CD8-positive, alpha-beta memory T cell (primary cell): ENCODE measurements at regions of chr3 and their contacts with region 1.

Region 1: DNA sequence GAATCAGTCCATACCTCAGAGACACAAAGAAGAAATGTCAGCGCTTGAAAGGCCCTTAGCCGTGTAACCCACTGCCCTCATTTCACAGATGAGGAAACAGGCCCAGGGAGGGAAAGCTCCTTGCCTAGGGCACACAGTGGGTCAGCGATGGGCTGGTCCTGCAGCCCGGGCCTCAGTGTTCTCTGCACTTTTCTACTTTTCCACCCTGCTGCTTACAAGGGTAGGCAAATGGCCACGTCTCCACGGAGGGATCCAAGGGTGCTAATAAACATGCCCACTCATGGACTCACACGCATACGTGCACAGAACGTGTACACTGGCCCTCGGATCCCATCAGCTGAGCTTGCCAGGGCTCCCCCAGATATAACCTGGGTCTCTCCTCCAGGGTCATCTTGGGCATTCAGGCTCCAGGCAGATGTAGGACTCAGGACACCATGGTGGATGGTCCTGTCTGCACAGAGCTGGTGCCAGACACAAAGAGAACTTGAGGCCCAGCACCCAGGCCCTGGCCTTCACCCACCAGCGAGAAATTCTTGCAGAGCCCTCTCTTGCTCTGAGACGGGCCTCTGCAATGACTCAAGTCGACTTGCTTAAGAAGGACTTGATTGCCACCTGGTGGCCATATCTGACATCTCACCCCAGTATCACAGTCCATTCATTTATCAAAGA is 34.5 kb upstream of the VPS8 start:
- DNase-seq: peak; percentile 60 to 85 (median 71)
- H3K4me3 ChIP-seq: no peak overlapping the region
- H3K4me3 Mint-ChIP-seq: no peak overlapping the region
- H3K27ac ChIP-seq: no peak overlapping the region
- H3K27ac Mint-ChIP-seq: no peak overlapping the region
- H3K4me1 ChIP-seq: no peaks in the 10 kb centered on the region
- H3K4me1 Mint-ChIP-seq: no peaks in the 10 kb centered on the region
- H3K27me3 ChIP-seq: peaks cover 8% of the 10 kb centered on the region
- H3K27me3 Mint-ChIP-seq: peaks cover 15 to 62% of the 10 kb centered on the region in 2 donors

Region 2: GRCh38 chr3:184362668-184363540 is 414.6 kb before region 1 on chr3:
- CTCF ChIA-PET with region 1: no interaction called
- POLR2A ChIA-PET with region 1: interaction called, 11 read pairs
- DNase-seq: peak; percentile 89 to 96 (median 93)
- H3K4me3 ChIP-seq: peak overlapping the region; percentile 73
- H3K4me3 Mint-ChIP-seq: peak overlapping the region; percentile 92 to 99 (median 97)
- H3K27ac ChIP-seq: peak overlapping the region; percentile 88
- H3K27ac Mint-ChIP-seq: peak overlapping the region; percentile 95 to 98 (median 96)
- H3K4me1 ChIP-seq: peaks cover 23% of the 10 kb centered on the region
- H3K4me1 Mint-ChIP-seq: peaks cover 22 to 35% (median 31%) of the 10 kb centered on the region in 3 donors
- H3K27me3 ChIP-seq: no peaks in the 10 kb centered on the region
- H3K27me3 Mint-ChIP-seq: peaks cover 0 to 4% of the 10 kb centered on the region in 2 donors

Region 3: DNA sequence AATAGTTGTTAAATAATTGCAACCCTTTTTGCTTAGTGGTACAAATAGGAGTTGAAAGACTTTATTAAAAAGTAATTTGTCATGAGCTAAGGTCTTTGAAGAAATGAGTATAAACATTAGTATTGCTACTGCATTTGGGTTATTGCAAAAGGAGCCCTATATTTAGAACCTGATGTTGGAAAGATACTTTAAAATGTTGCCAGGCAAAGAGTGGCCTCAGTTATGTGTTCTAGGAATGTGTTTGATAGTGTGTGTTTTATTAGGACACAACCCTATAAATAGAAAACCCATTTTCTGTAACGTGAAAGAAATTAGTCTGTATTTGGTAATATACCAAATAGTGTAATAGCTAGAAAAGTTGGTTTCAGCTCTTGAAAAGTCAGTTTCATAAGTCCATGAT is 45.2 kb after region 1 on chr3:
- CTCF ChIA-PET with region 1: no interaction called
- POLR2A ChIA-PET with region 1: no interaction called
- DNase-seq: no peak
- H3K4me3 ChIP-seq: no peak overlapping the region
- H3K4me3 Mint-ChIP-seq: no peak overlapping the region
- H3K27ac ChIP-seq: no peak overlapping the region
- H3K27ac Mint-ChIP-seq: no peak overlapping the region
- H3K4me1 ChIP-seq: no peaks in the 10 kb centered on the region
- H3K4me1 Mint-ChIP-seq: peaks cover 9 to 30% (median 12%) of the 10 kb centered on the region in 3 donors
- H3K27me3 ChIP-seq: no peaks in the 10 kb centered on the region
- H3K27me3 Mint-ChIP-seq: no peaks in the 10 kb centered on the region

Region 4: DNA sequence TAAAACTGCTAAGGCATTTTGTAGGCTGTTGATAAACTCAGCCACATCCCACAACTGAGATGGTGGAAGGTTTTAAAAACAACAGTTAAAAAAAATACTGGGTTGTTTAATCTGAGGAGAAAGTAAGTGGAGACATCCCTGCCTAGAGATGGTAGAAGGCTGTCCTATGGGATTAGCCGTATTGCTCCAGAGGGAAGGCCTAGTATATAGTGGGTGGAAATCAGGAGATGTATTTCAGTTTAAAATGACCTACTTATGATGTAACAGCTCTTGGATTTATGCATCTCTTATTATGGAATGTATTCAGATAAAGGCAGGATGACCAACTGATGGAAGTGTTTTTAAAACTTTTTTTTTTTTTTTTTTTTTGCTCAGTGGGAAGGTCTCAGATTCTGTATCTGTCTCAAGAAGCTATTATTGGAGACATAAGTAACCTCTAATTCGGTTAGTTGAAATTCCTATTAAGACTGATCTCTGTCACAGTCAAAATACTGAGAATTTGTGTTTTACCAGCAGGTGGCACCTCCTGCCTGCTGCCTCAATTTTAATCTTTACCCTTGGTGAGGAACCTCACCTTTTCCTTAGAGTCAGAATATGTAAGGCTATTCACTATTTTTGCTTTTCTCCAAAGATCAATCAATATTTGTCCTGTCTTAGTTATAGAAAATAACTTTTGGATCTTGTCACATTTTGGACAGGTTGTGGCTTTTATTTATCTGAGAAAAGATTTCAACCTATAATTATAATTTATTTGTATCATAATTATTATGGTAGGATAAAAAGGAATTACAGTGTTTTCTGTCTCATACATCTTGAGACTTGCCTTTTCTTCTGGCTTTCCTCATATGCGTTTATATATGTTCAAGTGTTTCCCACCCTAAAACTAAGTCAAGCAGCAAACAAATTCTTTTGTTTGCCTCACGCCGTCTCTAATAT is 97.5 kb after region 1 on chr3:
- CTCF ChIA-PET with region 1: no interaction called
- POLR2A ChIA-PET with region 1: no interaction called
- DNase-seq: no peak
- H3K4me3 ChIP-seq: no peak overlapping the region
- H3K4me3 Mint-ChIP-seq: no peak overlapping the region
- H3K27ac ChIP-seq: no peak overlapping the region
- H3K27ac Mint-ChIP-seq: peak overlapping the region in 2 of 8 donors; percentile 16 to 44
- H3K4me1 ChIP-seq: no peaks in the 10 kb centered on the region
- H3K4me1 Mint-ChIP-seq: no peaks in the 10 kb centered on the region
- H3K27me3 ChIP-seq: no peaks in the 10 kb centered on the region
- H3K27me3 Mint-ChIP-seq: no peaks in the 10 kb centered on the region

Region 5: DNA sequence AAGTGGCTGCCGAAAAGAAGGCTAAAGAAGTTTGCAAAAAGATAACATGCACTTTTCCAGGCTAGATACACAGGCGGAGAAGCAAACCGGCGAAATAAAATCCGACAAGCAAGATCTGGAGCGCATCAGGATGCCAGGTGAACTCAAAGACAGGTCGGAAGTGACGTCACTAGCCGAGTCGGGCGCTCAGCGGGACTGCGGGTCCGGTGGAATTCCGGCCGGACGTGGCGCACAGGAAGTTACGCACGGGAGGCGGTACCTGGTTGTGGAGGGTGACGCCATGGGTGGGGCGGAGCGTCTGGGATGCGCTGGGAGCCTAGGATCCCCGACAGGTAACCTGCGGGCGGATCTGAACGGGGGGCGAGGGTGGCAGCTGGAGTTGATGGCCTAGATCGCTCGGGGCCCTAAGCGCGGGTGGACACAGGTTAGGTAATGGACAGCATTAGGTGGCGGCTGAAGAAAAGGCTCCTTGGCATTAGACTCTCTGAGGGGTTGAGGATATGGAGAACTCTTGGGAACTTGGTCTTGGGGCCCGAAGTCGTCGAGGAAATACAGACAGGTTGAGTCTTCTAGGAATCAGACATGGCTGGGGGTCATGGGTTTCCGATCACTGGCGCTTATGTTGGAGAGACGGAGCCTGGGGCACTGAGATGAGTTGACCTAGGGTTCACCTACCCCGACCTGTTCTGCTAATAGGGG is 505.4 kb after region 1 on chr3:
- CTCF ChIA-PET with region 1: no interaction called
- POLR2A ChIA-PET with region 1: no interaction called
- DNase-seq: peak; percentile 87 to 95 (median 90)
- H3K4me3 ChIP-seq: peak overlapping the region; percentile 70
- H3K4me3 Mint-ChIP-seq: peak overlapping the region; percentile 84 to 98 (median 94)
- H3K27ac ChIP-seq: peak overlapping the region; percentile 62
- H3K27ac Mint-ChIP-seq: peak overlapping the region; percentile 79 to 99 (median 96)
- H3K4me1 ChIP-seq: peaks cover 14% of the 10 kb centered on the region
- H3K4me1 Mint-ChIP-seq: peaks cover 19 to 21% (median 20%) of the 10 kb centered on the region in 3 donors
- H3K27me3 ChIP-seq: no peaks in the 10 kb centered on the region
- H3K27me3 Mint-ChIP-seq: peaks cover 13 to 25% of the 10 kb centered on the region in 2 donors